ENCODE measurements at regions of chr14 and their contacts with region 1.

Region 1: DNA sequence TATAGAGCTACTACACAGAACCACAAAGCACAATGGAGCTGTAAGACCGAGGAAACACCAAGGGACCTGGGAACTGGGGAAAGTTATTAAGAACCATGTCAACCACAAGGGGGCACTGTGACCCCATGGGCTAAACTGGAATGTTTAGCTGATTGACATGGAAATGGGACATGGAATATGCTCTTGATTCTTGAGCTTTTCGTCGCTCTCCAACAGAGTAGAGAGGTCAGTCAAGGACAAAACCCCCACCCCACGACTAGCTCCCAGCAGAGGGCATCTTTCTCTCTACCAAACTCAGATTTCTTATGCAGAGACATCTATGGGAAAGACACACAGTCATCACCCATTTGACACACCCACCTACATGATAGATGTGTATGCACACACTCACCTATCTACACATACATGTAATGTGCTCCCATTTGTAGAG is 10.1 kb downstream of the NDRG2 start:
- DNase-seq: peak; percentile 87
- ATAC-seq: peak; percentile 87
- H3K4me3 Mint-ChIP-seq: no peak overlapping the region
- H3K27ac Mint-ChIP-seq: no peak overlapping the region
- H3K4me1 Mint-ChIP-seq: no peaks in the 10 kb centered on the region
- H3K27me3 Mint-ChIP-seq: peaks cover 15% of the 10 kb centered on the region

Region 2: GRCh38 chr14:20454516-20455354 is 560.0 kb before region 1 on chr14 and contains the starts of genes APEX1 and OSGEP:
- CTCF ChIA-PET with region 1: no interaction called
- POLR2A ChIA-PET with region 1: no interaction called
- intact Hi-C with region 1: no loop called
- DNase-seq: peak; percentile 99
- ATAC-seq: peak; percentile 89
- H3K4me3 Mint-ChIP-seq: no peak within 1 kb of the TSS
- H3K27ac Mint-ChIP-seq: no peak within 1 kb of the TSS
- H3K4me1 Mint-ChIP-seq: peaks cover 18% of the 10 kb centered on the region
- H3K27me3 Mint-ChIP-seq: no peaks in the 10 kb centered on the region
- total RNA-seq, gene APEX1: 216 to 257 TPM
- total RNA-seq, gene OSGEP: 46.2 to 47.5 TPM

Region 3: GRCh38 chr14:20568393-20568792 is 446.4 kb before region 1 on chr14:
- CTCF ChIA-PET with region 1: no interaction called
- POLR2A ChIA-PET with region 1: no interaction called
- intact Hi-C with region 1: no loop called
- DNase-seq: no peak
- ATAC-seq: no peak
- H3K4me3 Mint-ChIP-seq: no peak overlapping the region
- H3K27ac Mint-ChIP-seq: no peak overlapping the region
- H3K4me1 Mint-ChIP-seq: peaks cover 8% of the 10 kb centered on the region
- H3K27me3 Mint-ChIP-seq: no peaks in the 10 kb centered on the region

Region 4: DNA sequence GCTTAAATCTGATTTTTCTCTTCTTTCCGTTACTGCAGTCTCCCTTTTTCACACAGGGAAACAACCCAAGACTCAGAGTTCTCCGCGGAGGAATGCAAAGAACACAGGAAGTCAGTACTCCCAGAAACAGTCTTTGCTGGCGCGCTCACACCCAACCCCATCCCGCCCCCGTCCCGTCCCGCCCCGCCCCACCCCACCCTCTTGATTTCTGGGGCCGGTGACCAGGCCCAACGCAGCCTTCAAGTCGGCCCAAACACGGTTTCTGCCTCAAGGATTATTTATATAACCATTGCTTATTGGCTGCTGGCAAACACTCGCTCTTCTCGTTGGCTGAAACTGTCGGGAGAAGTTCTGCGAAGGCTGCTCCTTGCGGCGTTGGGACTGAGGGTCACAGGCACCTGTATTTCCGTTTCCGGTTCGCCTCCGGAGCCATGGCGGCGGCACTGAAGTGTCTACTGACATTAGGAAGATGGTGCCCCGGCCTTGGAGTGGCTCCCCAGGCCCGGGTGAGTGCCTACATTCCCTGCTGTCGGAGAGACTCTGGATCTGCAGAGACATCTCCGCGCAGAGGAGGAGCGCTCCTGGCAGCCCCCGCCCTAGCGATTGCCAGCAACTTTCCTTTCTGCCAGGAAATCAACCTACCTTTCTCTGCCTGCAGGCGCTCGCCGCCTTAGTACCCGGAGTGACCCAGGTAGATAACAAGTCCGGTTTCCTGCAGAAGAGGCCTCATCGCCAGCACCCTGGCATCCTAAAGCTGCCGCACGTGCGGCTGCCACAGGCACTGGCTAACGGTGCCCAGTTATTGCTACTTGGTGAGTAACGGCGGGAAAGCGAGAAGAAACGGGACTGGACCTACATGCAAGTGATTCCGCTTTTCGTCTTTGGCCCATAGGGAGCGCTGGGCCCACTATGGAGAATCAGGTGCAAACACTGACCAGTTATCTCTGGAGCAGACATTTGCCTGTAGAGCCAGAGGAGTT is 24.9 kb before region 1 on chr14 and contains the start of gene METTL17:
- CTCF ChIA-PET with region 1: interaction called, 68 read pairs
- POLR2A ChIA-PET with region 1: no interaction called
- intact Hi-C with region 1: no loop called
- DNase-seq: peak; percentile 93
- ATAC-seq: peak; percentile 97
- H3K4me3 Mint-ChIP-seq: peak within 1 kb of the TSS; percentile 92
- H3K27ac Mint-ChIP-seq: peak within 1 kb of the TSS; percentile 89
- H3K4me1 Mint-ChIP-seq: peaks cover 37% of the 10 kb centered on the region
- H3K27me3 Mint-ChIP-seq: no peaks in the 10 kb centered on the region
- total RNA-seq, gene METTL17: 89.3 to 90.0 TPM

Region 5: GRCh38 chr14:21003788-21004346 is 10.9 kb before region 1 on chr14:
- CTCF ChIA-PET with region 1: interaction called, 68 read pairs
- POLR2A ChIA-PET with region 1: no interaction called
- intact Hi-C with region 1: no loop called
- DNase-seq: no peak
- ATAC-seq: no peak
- H3K4me3 Mint-ChIP-seq: no peak overlapping the region
- H3K27ac Mint-ChIP-seq: no peak overlapping the region
- H3K4me1 Mint-ChIP-seq: no peaks in the 10 kb centered on the region
- H3K27me3 Mint-ChIP-seq: no peaks in the 10 kb centered on the region

Region 6: DNA sequence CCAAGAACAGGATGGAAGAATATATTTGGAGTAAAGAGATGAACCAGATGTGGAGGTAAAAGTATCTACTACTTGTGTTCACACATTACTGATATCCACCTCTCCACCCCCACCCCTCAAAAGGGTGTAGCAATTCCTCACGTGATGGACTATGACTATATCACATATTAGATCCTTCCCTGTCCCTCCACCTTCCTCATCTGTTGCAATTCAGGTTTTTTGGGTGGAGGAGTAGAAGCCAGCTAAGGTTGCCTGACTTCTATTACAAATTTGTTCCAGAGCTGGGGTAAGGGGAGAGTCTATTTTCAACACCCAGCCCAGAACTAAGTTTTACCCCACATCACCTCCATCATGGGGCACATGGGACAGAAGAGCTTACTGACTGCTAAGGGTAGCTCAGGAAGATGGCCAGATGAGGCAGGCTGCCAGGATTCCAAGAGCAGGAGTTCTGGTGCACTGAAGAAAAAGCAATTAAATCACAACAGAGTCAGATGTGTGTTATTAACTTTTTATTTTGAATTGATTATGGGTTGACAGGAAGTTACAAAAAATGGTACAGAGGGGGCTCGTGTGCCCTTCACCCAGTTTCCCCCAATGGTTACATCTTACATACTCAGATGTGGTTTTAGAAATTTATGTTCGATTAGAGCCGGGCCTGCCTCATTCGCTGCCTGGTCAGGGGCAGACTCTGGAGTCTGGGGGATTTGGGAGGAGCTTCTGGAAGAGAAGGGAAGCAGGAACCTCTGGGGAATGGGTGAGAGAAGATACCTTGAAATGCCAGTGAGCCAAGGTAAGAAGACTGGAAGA is 17.8 kb after region 1 on chr14:
- CTCF ChIA-PET with region 1: interaction called, 34 read pairs
- POLR2A ChIA-PET with region 1: no interaction called
- intact Hi-C with region 1: loop called in 1 of 2 experiments (anchors 1 kb)
- DNase-seq: no peak
- ATAC-seq: no peak
- H3K4me3 Mint-ChIP-seq: no peak overlapping the region
- H3K27ac Mint-ChIP-seq: no peak overlapping the region
- H3K4me1 Mint-ChIP-seq: no peaks in the 10 kb centered on the region
- H3K27me3 Mint-ChIP-seq: no peaks in the 10 kb centered on the region

Region 7: GRCh38 chr14:21049271-21049673 is 34.5 kb after region 1 on chr14:
- CTCF ChIA-PET with region 1: interaction called, 24 read pairs
- POLR2A ChIA-PET with region 1: interaction called, 4 read pairs
- intact Hi-C with region 1: no loop called
- DNase-seq: no peak
- ATAC-seq: no peak
- H3K4me3 Mint-ChIP-seq: no peak overlapping the region
- H3K27ac Mint-ChIP-seq: no peak overlapping the region
- H3K4me1 Mint-ChIP-seq: peaks cover 6% of the 10 kb centered on the region
- H3K27me3 Mint-ChIP-seq: peaks cover 3% of the 10 kb centered on the region

Region 8: GRCh38 chr14:21071225-21072030 is 56.7 kb after region 1 on chr14:
- CTCF ChIA-PET with region 1: interaction called, 22 read pairs
- POLR2A ChIA-PET with region 1: no interaction called
- intact Hi-C with region 1: no loop called
- DNase-seq: peak; percentile 83
- ATAC-seq: peak; percentile 72
- H3K4me3 Mint-ChIP-seq: peak overlapping the region; percentile 63
- H3K27ac Mint-ChIP-seq: no peak overlapping the region
- H3K4me1 Mint-ChIP-seq: peaks cover 33% of the 10 kb centered on the region
- H3K27me3 Mint-ChIP-seq: peaks cover 54% of the 10 kb centered on the region

Region 9: DNA sequence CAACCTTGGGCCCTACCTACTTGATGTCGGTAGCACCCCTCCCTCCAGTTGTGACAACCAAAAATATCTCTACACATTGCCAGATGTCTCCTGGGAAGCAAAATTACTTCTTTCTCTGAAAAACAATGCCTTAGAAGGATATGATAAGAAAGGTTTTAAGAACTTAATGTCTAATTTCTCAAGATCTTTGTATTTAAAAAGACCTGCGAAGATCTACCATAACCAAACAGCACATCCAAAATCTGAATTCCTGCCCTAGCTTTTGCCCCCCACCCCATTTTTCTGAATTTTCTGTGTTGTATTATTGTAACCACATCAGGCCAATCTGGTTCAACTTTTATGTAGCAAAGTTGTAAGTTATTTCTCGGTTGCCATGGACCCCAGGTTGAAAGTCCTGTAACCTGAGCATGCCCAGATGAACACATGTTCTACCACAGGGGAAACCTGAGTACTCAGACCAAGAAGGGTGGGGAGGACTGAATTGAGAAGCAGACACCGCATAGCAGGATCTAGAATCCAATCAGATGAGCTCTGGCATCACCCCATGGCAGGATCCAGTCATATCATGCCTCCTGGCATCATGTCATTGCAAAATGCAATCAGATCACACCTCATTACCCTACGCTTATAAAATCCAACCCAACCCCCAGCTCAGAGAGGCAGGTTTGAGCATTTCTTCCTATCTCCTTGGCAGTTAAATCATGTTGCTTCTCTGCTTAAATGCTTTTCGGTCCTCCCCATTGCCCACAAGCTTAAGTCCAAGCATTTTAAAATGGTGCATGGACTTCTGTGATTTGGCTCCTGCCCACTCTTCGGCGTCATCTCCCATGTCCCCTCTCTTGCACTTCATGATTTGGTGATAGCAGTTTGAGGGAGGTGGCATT is 94.8 kb after region 1 on chr14:
- CTCF ChIA-PET with region 1: interaction called, 111 read pairs
- POLR2A ChIA-PET with region 1: interaction called, 14 read pairs
- intact Hi-C with region 1: loop called (anchors 1 kb)
- DNase-seq: peak; percentile 77
- ATAC-seq: peak; percentile 94
- H3K4me3 Mint-ChIP-seq: no peak overlapping the region
- H3K27ac Mint-ChIP-seq: peak overlapping the region; percentile 81
- H3K4me1 Mint-ChIP-seq: peaks cover 27% of the 10 kb centered on the region
- H3K27me3 Mint-ChIP-seq: no peaks in the 10 kb centered on the region

Region 10: GRCh38 chr14:21941885-21942284 is 927.1 kb after region 1 on chr14:
- CTCF ChIA-PET with region 1: no interaction called
- POLR2A ChIA-PET with region 1: no interaction called
- intact Hi-C with region 1: no loop called
- DNase-seq: no peak
- ATAC-seq: peak; percentile 11
- H3K4me3 Mint-ChIP-seq: peak overlapping the region; percentile 68
- H3K27ac Mint-ChIP-seq: peak overlapping the region; percentile 89
- H3K4me1 Mint-ChIP-seq: peaks cover 20% of the 10 kb centered on the region
- H3K27me3 Mint-ChIP-seq: no peaks in the 10 kb centered on the region